Activated CD8-positive, alpha-beta T cell treated with anti-CD3 and anti-CD28 coated beads for 36 hours (primary cell): ENCODE measurements at regions of chr10 and their contacts with region 1.

Region 1: DNA sequence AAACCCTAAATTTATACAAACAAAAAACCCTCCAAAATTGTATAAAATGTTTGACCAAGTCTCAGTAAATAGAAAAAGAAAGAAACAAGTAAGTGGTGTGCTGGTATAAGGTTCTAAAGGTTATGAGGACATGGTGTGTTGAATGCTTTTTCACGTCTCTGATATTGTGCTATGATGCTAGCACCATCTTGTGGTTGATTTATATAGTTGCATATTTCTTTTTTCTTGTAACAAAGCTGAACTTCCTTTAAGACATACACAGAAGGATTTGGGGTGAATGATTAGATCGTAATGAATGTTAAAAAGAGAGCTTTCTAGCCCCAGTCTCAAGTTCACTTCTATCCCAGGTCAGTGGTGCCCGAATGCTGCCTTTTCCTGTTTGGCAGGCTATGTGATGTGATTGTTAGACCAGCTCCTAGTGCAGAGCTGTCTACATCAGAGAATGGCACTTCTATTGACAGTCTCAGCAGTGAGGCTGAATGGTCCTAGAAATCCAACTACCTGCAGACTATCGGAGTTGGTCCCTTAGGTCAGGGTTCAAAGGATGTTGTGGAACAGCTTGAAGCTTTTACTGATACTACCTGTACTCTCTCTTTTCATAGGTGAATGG is 25.0 kb downstream of the VTI1A start:
- DNase-seq: no peak
- ATAC-seq: peak; percentile 78
- H3K4me3 Mint-ChIP-seq: no peak overlapping the region
- H3K27ac Mint-ChIP-seq: peak overlapping the region; percentile 64
- H3K4me1 Mint-ChIP-seq: peaks cover 14% of the 10 kb centered on the region
- H3K27me3 Mint-ChIP-seq: no peaks in the 10 kb centered on the region
- CTCF ChIP-seq: peak; percentile 82

Region 2: GRCh38 chr10:112433136-112433535 is 38.8 kb before region 1 on chr10:
- CTCF ChIA-PET with region 1: interaction called, 11 read pairs
- POLR2A ChIA-PET with region 1: interaction called, 4 read pairs
- intact Hi-C with region 1: no loop called
- DNase-seq: no peak
- ATAC-seq: no peak
- H3K4me3 Mint-ChIP-seq: no peak overlapping the region
- H3K27ac Mint-ChIP-seq: no peak overlapping the region
- H3K4me1 Mint-ChIP-seq: no peaks in the 10 kb centered on the region
- H3K27me3 Mint-ChIP-seq: no peaks in the 10 kb centered on the region
- CTCF ChIP-seq: no peak

Region 3: DNA sequence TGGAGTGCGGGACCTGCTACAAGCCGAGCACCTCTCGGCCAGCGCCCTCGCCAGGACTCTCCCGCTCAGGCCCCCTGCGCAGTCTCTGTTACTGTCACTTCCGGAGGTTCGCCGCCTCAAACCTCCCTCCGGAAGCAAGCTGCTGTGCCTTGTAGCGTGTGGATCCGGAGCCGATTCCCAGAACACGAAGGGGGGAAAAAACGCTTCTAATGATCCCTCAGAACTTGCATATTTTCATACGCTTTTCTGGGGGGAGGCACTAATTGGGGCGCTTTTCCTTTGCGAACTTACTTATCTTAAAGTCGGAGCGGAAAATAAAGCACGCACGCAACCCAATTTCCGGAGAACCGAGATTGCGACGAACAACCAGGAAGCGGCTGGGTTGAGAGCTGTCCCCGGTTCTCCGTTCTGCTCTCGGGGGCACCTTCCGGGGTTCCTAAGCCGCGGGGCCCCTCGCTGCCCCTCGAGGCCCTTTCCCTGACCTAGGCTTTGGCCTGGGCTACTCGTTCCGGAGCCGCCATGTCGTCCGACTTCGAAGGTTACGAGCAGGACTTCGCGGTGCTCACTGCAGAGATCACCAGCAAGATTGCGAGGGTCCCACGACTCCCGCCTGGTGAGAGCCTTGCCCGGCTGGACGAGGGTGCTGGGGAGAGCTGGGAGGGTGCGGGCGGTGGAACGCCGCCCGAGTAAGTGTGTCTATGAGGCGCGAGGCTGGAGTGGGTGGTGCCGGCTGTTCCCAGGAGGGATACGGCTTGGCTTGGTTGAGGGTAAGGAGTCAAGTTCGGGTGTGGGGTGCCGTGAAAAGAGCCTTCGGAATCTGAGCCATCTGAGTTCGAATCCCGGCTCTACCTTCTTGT is 24.9 kb before region 1 on chr10 and contains the starts of genes VTI1A and ZDHHC6:
- CTCF ChIA-PET with region 1: interaction called, 16 read pairs
- POLR2A ChIA-PET with region 1: no interaction called
- intact Hi-C with region 1: no loop called
- DNase-seq: peak; percentile 89
- ATAC-seq: peak; percentile 93
- H3K4me3 Mint-ChIP-seq: peak within 1 kb of the TSS; percentile 88
- H3K27ac Mint-ChIP-seq: peak within 1 kb of the TSS; percentile 92
- H3K4me1 Mint-ChIP-seq: peaks cover 50% of the 10 kb centered on the region
- H3K27me3 Mint-ChIP-seq: no peaks in the 10 kb centered on the region
- CTCF ChIP-seq: no peak
- total RNA-seq, gene VTI1A: 29.4 to 30.0 TPM
- total RNA-seq, gene ZDHHC6: 36.6 to 37.6 TPM

Region 4: DNA sequence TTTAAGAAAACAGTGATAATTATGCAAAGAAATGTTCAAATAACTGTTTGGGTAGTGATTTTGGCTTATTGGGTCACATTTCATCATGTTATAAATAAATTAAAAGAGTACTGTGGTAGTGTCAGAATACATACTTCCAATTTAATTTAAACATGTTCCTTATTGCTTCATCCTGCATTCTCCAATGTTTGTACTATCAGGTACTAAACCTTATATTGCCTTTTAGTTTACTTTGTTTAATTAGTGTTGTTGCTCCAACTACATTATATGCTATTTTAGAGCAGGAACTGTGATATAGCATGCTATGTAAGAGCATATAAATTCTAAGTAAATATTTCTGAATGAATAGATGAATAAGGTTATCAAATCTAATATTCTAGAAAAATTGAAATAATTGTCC is 16.0 kb after region 1 on chr10:
- CTCF ChIA-PET with region 1: interaction called, 13 read pairs
- POLR2A ChIA-PET with region 1: no interaction called
- intact Hi-C with region 1: no loop called
- DNase-seq: no peak
- ATAC-seq: no peak
- H3K4me3 Mint-ChIP-seq: no peak overlapping the region
- H3K27ac Mint-ChIP-seq: no peak overlapping the region
- H3K4me1 Mint-ChIP-seq: peaks cover 13% of the 10 kb centered on the region
- H3K27me3 Mint-ChIP-seq: no peaks in the 10 kb centered on the region
- CTCF ChIP-seq: no peak

Region 5: GRCh38 chr10:112687647-112688046 is 215.7 kb after region 1 on chr10:
- CTCF ChIA-PET with region 1: no interaction called
- POLR2A ChIA-PET with region 1: no interaction called
- intact Hi-C with region 1: no loop called
- DNase-seq: no peak
- ATAC-seq: no peak
- H3K4me3 Mint-ChIP-seq: no peak overlapping the region
- H3K27ac Mint-ChIP-seq: no peak overlapping the region
- H3K4me1 Mint-ChIP-seq: no peaks in the 10 kb centered on the region
- H3K27me3 Mint-ChIP-seq: no peaks in the 10 kb centered on the region
- CTCF ChIP-seq: no peak

Region 6: DNA sequence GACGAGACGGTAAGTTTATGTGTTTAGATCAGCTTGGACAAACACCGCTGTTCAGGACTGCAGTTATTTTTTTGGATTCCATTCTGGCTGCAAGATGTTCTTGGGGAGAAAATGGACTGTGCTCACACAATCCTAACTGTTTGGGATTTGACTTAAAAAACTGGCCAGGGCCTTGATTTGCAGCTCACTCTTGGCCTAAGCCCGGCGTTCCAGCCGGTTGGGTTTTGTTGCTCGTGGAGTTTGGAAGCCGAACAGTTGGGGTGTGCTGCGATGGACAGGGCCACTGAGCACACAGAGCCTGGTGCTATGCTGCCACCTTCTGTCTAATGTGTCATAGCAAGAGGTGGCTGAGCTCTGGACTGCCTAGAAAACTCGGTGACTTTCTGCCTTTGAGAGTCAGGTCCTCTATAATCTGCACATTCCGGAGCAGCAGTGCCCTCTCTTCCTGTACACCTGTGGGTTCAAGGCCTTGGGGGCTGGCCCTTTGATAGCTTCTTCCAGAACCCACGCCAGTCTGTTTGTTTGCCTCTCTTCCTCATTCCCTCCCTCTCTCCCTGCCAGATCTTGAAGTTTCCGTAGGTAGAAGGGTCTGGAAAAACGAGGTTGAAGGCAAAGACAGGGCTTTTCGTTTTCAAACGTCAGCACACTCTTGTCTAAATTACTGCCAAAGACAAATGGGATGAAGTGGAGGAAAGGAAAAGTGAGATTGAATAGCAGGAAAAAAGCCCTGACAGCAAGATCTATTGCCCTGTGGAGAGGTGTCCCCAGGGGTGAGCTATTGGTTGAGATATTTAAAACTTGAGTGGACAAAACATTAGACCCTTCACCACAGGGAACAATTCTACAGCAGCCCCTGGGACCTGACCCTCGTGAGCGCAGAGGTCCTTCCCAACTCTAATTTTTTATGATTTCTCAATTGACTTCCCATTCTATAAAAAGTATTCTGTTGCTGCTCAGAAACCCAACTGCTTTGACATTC is 913.3 kb after region 1 on chr10:
- CTCF ChIA-PET with region 1: interaction called, 13 read pairs
- POLR2A ChIA-PET with region 1: no interaction called
- intact Hi-C with region 1: loop called (anchors 10 kb)
- DNase-seq: peak; percentile 70
- ATAC-seq: peak; percentile 94
- H3K4me3 Mint-ChIP-seq: no peak overlapping the region
- H3K27ac Mint-ChIP-seq: no peak overlapping the region
- H3K4me1 Mint-ChIP-seq: peaks cover 23% of the 10 kb centered on the region
- H3K27me3 Mint-ChIP-seq: peaks cover 3% of the 10 kb centered on the region
- CTCF ChIP-seq: peak; percentile 74